CD8-positive, alpha-beta memory T cell (primary cell): ENCODE measurements at regions of chr3 and their contacts with region 1.

Region 1: GRCh38 chr3:113051302-113051711 is 60.5 kb downstream of the GTPBP8 start:
- DNase-seq: peak; percentile 72 to 87 (median 73)
- H3K4me3 ChIP-seq: no peak overlapping the region
- H3K4me3 Mint-ChIP-seq: no peak overlapping the region
- H3K27ac ChIP-seq: no peak overlapping the region
- H3K27ac Mint-ChIP-seq: no peak overlapping the region
- H3K4me1 ChIP-seq: peaks cover 8% of the 10 kb centered on the region
- H3K4me1 Mint-ChIP-seq: peaks cover 0 to 4% (median 2%) of the 10 kb centered on the region in 3 donors
- H3K27me3 ChIP-seq: no peaks in the 10 kb centered on the region
- H3K27me3 Mint-ChIP-seq: no peaks in the 10 kb centered on the region

Region 2: GRCh38 chr3:113287803-113288648 is 236.7 kb after region 1 on chr3:
- CTCF ChIA-PET with region 1: interaction called, 24 read pairs
- POLR2A ChIA-PET with region 1: no interaction called
- DNase-seq: peak in 3 of 5 donors; percentile 16 to 34 (median 18)
- H3K4me3 ChIP-seq: no peak overlapping the region
- H3K4me3 Mint-ChIP-seq: no peak overlapping the region
- H3K27ac ChIP-seq: no peak overlapping the region
- H3K27ac Mint-ChIP-seq: no peak overlapping the region
- H3K4me1 ChIP-seq: no peaks in the 10 kb centered on the region
- H3K4me1 Mint-ChIP-seq: no peaks in the 10 kb centered on the region
- H3K27me3 ChIP-seq: no peaks in the 10 kb centered on the region
- H3K27me3 Mint-ChIP-seq: peaks cover 0 to 3% of the 10 kb centered on the region in 2 donors